CD4-positive, alpha-beta memory T cell (primary cell): ENCODE measurements at regions of chr11 and their contacts with region 1.

Region 1: DNA sequence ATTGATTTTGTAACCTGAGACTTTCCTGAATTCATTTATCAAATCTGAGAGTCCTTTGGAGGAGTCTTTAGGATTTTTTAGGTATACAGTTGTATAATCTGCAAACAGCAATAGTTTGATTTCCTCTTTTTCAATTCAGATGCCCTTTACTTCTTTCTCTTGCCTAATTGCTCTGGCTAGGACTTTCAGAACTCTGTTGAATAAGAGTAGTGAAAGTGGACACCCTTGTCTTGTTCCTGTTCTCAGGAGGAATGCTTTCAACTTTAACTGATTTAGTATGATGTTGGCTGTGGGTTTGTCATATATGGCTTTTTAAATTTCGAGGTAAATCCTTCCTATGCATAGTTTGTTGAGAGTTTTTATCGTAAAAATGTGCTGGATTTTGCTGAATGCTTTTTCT is 227.4 kb downstream of the CSNK2A3 start:
- DNase-seq: no peak
- H3K4me3 ChIP-seq: no peak overlapping the region
- H3K4me3 Mint-ChIP-seq: no peak overlapping the region
- H3K27ac ChIP-seq: no peak overlapping the region
- H3K27ac Mint-ChIP-seq: no peak overlapping the region
- H3K4me1 ChIP-seq: no peaks in the 10 kb centered on the region
- H3K4me1 Mint-ChIP-seq: no peaks in the 10 kb centered on the region
- H3K27me3 ChIP-seq: no peaks in the 10 kb centered on the region
- H3K27me3 Mint-ChIP-seq: peaks cover 3 to 13% of the 10 kb centered on the region in 2 donors

Region 2: GRCh38 chr11:11078344-11079086 is 47.1 kb before region 1 on chr11:
- CTCF ChIA-PET with region 1: no interaction called
- POLR2A ChIA-PET with region 1: no interaction called
- intact Hi-C with region 1: loop called (anchors 5 kb)
- DNase-seq: no peak
- H3K4me3 ChIP-seq: no peak overlapping the region
- H3K4me3 Mint-ChIP-seq: no peak overlapping the region
- H3K27ac ChIP-seq: no peak overlapping the region
- H3K27ac Mint-ChIP-seq: no peak overlapping the region
- H3K4me1 ChIP-seq: no peaks in the 10 kb centered on the region
- H3K4me1 Mint-ChIP-seq: peaks cover 3 to 7% (median 3%) of the 10 kb centered on the region in 4 donors
- H3K27me3 ChIP-seq: no peaks in the 10 kb centered on the region
- H3K27me3 Mint-ChIP-seq: peaks cover 6 to 9% of the 10 kb centered on the region in 2 donors